ENCODE measurements at regions of chr16 and their contacts with region 1.

Region 1: GRCh38 chr16:30941600-30942425 is 7.1 kb upstream of the ORAI3 start:
- DNase-seq: peak; percentile 93
- CTCF ChIP-seq: peak; percentile 95

Region 2: GRCh38 chr16:30829130-30830071 is 112.4 kb before region 1 on chr16:
- CTCF ChIA-PET with region 1: no interaction called
- POLR2A ChIA-PET with region 1: no interaction called
- DNase-seq: no peak
- CTCF ChIP-seq: no peak

Region 3: DNA sequence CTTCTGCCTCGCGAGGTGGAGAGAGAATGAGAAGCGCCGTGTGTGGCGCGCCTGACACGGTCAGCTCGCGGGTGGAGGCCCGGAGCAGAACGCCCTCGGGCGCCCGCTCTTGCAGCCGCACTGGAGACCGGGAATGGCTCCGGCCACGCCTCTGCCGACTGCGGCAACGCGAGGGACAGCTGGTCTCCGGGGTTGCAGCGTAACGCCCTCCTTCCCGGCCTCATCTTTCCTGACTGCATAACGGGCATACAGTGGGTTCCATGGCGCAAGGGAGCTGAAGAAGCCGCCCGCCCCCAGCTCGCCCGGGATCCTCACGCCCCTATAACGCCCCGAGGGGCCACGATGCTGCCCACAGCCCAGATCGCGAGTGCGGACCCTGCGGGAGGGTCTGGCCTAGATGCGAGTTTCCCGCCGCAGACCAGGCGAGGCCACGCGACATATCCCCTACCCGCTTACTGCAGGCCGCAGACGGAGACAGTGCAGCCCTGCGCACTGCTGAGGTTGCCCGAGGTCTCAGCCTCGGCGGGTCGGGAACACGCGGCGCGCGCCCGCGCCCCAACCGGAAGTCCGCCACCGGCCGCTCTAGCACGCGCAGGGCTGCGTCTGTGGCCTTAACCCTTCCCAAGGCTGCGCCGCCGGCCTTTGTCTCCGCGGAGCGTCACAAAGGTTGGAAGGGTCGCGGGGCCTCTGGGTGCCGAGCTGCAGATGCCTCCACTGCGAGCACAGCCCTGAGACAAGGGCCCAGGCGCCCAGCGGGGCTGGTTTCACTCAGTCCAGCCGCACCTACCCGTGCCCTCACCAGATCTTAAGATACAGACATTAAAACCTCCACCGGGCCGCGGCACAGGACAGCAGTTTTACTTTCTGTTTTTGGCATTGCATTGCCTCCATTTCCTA is 66.7 kb before region 1 on chr16:
- CTCF ChIA-PET with region 1: no interaction called
- POLR2A ChIA-PET with region 1: no interaction called
- DNase-seq: peak; percentile 89
- CTCF ChIP-seq: peak; percentile 8

Region 4: GRCh38 chr16:30922420-30922959 is 19.3 kb before region 1 on chr16:
- CTCF ChIA-PET with region 1: interaction called, 20 read pairs
- POLR2A ChIA-PET with region 1: no interaction called
- DNase-seq: peak; percentile 94
- CTCF ChIP-seq: no peak

Region 5: DNA sequence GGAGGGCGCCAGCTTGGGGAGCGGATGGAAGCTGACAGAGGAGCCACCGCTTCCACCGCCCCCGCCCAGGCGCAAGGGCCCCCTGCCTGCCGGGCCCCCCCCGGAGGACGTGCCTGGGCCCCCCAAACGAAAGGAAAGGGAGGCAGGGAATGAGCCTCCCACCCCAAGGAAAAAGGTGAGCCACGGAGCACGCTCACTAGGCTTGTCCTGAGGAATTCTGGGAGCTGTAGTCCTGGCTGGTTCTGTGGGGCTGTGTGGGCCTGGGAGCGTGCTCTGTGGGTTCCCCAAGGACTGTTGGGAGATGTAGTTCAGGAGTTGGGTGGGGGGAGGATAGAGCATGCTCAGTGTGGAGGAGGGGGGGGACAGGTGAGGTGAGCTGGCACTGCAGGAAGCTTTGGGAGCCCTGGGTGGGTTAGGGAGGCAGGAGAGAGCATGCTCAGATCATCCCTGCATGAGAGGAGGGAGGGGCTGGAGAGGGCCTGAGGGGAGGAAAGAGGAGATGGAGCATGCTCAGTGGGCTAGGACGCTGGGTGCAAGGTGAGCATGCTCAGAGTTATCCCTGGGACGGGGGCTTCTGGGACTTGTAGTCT is 13.9 kb before region 1 on chr16:
- CTCF ChIA-PET with region 1: interaction called, 173 read pairs
- POLR2A ChIA-PET with region 1: no interaction called
- DNase-seq: no peak
- CTCF ChIP-seq: no peak

Region 6: DNA sequence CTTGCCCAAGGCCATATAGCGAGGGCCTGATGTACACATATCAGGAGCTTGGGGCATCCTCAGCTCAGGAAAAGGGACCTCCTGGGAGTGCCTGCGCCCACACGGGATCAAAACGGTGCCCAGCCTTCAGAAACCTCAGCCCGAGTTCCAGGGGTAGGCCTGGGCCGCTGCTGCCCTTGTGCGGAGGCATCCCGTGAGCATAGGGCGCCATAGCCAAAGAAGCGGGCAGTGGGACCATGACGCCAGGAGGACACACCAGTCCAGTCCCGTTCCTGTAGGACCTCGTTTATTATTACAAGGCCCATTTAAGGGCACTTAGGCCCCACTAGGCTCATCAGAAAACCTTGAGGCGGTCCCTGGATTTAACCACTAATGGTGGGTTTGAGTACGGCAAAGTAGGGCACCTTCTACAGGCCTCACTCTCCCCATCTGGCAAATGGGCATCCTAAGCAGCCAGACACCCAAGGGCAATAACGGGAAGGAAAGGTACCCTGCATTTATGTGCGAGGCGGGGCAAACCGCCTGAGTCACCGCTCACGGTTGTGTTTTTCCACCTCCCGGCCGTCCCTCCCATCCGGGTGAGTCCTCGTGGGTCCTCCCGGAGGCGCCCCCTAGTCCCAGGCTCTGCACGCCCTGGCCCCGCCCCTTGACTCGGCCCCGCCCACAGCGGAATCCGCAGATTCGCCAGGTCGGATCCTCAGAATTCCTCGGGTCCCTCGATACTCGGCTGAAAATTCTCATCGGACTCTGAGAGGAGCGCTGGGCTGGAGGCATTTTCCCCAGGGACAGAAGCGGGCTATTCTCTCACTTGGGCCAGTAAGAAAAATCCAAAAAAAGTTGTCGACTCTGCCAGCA is 15.0 kb after region 1 on chr16:
- CTCF ChIA-PET with region 1: interaction called, 173 read pairs
- POLR2A ChIA-PET with region 1: no interaction called
- DNase-seq: peak; percentile 87
- CTCF ChIP-seq: peak; percentile 38

Region 7: DNA sequence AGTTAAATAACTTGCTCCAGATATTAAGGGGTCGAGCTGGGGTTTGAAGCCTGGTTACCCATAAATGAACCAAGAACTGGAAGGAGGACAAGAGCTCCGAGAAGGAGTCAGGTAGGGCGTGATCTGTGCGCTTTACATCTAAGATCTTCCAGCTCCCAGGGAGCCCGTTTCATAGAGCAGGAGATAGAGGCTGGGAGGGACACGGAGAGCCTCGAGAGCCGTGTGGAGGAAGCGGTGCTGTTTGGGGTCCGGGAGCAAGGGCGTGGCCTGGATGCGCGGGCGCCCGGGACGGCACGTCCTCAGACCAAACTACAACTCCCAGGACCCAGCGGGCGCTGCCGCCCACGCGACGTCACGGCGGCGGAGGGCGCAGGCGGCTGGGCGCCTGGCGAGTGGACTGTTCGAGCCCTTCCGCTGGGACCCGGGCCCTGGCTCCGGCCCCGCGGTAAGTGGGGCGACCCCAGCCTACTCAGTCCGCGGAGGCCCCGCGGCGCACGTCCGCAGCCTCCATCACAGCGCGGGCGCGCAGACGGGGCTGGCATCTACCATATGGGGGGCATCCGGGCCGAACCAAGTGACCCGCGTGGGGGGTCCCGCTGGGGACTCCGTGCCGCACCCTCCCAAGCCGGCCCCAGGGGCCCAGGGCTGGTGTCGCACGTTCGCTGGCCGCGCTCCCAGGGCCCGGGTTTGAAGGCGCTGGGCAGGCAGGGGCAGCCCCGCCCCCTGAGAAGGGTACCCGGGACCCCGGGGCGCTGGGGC is 166.4 kb after region 1 on chr16 and contains the start of gene BCKDK:
- CTCF ChIA-PET with region 1: no interaction called
- POLR2A ChIA-PET with region 1: no interaction called
- DNase-seq: peak; percentile 93
- CTCF ChIP-seq: no peak

Measured in GM10248 (cell line).